SK-N-SH (cell line): ENCODE measurements at regions of chr5 and their contacts with region 1.

Region 1: GRCh38 chr5:177336112-177336511 is 15.4 kb downstream of the LMAN2 start:
- DNase-seq: peak; percentile 77
- H3K4me3 ChIP-seq: no peak overlapping the region
- H3K27ac ChIP-seq: no peak overlapping the region
- H3K4me1 ChIP-seq: no peaks in the 10 kb centered on the region
- H3K27me3 ChIP-seq: no peaks in the 10 kb centered on the region
- CTCF ChIP-seq: peak; percentile 51
- EP300 ChIP-seq: no peak
- RAD21 ChIP-seq: peak; percentile 34; the same call in 1 of the 2 replicates

Region 2: DNA sequence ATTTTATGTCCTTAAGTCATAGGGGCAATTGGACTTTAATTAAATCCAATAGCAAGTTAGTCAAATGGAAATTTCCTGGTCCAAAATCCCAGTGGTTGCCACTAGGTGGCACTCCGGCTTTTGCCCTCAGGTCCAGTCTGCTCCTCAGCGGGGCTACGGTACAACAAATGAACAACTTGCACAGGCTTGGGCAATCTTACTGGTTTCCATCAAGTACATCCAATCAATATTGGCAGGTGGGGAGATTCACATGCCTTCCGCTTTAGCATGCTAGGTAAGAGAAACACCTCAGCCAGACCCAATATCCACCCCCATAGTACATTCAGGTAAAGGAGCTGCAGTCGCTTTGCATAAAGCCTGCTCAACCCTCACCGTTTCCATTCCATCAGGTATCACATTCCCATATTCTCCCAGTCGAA is 18.1 kb before region 1 on chr5:
- CTCF ChIA-PET with region 1: interaction called, 31 read pairs
- POLR2A ChIA-PET with region 1: no interaction called
- DNase-seq: peak; percentile 73
- H3K4me3 ChIP-seq: peak overlapping the region in 1 of 2 experiments; percentile 24; a peak in 1 of 4 replicates
- H3K27ac ChIP-seq: no peak overlapping the region
- H3K4me1 ChIP-seq: peaks cover 0 to under 1% of the 10 kb centered on the region in 2 experiments; a peak in 1 of 4 replicates
- H3K27me3 ChIP-seq: no peaks in the 10 kb centered on the region
- CTCF ChIP-seq: peak; percentile 88
- EP300 ChIP-seq: no peak
- RAD21 ChIP-seq: peak; percentile 78